GM10248 (cell line): ENCODE measurements at regions of chr10 and their contacts with region 1.

Region 1: GRCh38 chr10:43461950-43462349 is 25.0 kb downstream of the ZNF487 start:
- DNase-seq: peak; percentile 65
- CTCF ChIP-seq: peak; percentile 55

Region 2: GRCh38 chr10:43292755-43293676 is 168.9 kb before region 1 on chr10:
- CTCF ChIA-PET with region 1: interaction called, 45 read pairs
- POLR2A ChIA-PET with region 1: no interaction called
- DNase-seq: peak; percentile 65
- CTCF ChIP-seq: peak; percentile 67

Region 3: DNA sequence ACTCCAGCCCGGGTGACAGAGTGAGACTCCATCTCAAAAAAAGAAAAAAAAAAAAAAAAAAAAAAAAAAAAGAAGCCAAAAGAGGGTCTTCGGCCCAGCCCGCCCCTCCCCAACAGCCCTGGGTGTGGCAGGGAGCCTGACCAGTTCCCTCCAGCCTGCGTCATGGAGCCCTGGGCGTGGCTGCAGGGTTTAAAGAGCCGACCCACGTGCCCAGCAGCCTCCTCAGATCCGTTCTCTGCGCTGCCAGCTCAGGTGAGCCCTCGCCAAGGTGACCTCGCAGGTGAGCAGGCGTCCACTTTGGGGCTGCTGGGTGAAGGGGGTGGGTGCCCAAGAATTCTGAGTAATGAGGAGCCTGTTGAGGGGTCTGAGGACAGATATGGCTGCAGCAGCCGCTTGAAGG is 90.5 kb before region 1 on chr10 and contains the start of gene FXYD4:
- CTCF ChIA-PET with region 1: no interaction called
- POLR2A ChIA-PET with region 1: interaction called, 11 read pairs
- DNase-seq: no peak
- CTCF ChIP-seq: no peak